Activated T-helper 1 cell treated with anti-CD3 and anti-CD28 coated beads, Interleukin-12 subunit alpha, Interleukin-12 subunit beta, Interleukin-2, Interleukin-4 antibody, amounts not matched to agents 30 ng/mL and 10 ng/mL and 1 ng/mL, durations not matched to agents 14 hours and 24 hours and 36 hours (primary cell): ENCODE measurements at regions of chr15 and their contacts with region 1.

Region 1: GRCh38 chr15:74438721-74439316 is 5.1 kb upstream of the SEMA7A start:
- DNase-seq: peak; percentile 73
- H3K4me3 Mint-ChIP-seq: no peak overlapping the region
- H3K27ac Mint-ChIP-seq: peak overlapping the region; percentile 1
- H3K4me1 Mint-ChIP-seq: peaks cover 58% of the 10 kb centered on the region
- H3K27me3 Mint-ChIP-seq: no peaks in the 10 kb centered on the region

Region 2: GRCh38 chr15:74402873-74403587 is 35.8 kb before region 1 on chr15:
- intact Hi-C with region 1: loop called (anchors 1 kb)
- DNase-seq: peak; percentile 70
- H3K4me3 Mint-ChIP-seq: peak overlapping the region; percentile 75
- H3K27ac Mint-ChIP-seq: peak overlapping the region; percentile 85
- H3K4me1 Mint-ChIP-seq: peaks cover 89% of the 10 kb centered on the region
- H3K27me3 Mint-ChIP-seq: no peaks in the 10 kb centered on the region

Region 3: DNA sequence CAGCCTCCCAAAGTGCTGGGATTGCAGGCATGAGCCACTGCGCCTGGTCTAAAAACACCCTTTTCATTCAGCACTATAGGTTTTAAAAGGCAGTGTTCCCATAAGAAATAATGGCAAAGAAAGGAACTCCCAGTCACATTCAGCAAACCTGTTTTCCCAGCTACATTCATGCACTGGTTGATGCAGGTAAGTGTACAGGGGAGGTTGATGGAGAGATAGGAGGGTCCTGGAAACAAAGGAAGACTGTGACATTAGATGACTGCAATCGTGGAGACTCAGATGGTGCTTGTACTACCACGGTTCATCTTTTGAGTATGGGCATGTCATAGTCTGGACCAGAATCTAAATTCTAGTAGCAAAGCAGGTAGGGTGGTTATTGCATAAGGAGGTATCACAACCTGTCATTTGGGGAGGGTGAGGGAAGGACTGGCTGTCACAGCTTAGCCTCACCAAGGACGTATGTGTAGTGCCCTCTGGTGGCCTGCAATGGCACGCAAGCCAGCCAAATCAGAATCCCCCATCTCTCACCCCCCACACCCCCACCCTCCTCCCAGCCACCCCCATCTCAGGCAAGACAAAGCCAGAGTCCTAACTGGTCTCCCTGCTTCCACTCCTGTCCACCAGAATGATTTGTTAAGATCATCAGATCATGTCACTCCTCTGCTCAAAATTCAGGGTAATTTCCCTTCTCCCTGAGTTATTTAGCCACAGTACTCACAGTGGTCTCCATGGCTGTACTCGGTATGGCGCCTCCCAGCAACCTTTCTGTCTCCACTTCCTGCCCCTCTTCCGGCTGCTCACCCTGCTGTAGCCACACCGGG is 50.9 kb after region 1 on chr15:
- intact Hi-C with region 1: loop called (anchors 1 kb)
- DNase-seq: peak; percentile 63
- H3K4me3 Mint-ChIP-seq: no peak overlapping the region
- H3K27ac Mint-ChIP-seq: peak overlapping the region; percentile 64
- H3K4me1 Mint-ChIP-seq: peaks cover 13% of the 10 kb centered on the region
- H3K27me3 Mint-ChIP-seq: no peaks in the 10 kb centered on the region